ENCODE measurements at regions of chr10 and their contacts with region 1.

Region 1: DNA sequence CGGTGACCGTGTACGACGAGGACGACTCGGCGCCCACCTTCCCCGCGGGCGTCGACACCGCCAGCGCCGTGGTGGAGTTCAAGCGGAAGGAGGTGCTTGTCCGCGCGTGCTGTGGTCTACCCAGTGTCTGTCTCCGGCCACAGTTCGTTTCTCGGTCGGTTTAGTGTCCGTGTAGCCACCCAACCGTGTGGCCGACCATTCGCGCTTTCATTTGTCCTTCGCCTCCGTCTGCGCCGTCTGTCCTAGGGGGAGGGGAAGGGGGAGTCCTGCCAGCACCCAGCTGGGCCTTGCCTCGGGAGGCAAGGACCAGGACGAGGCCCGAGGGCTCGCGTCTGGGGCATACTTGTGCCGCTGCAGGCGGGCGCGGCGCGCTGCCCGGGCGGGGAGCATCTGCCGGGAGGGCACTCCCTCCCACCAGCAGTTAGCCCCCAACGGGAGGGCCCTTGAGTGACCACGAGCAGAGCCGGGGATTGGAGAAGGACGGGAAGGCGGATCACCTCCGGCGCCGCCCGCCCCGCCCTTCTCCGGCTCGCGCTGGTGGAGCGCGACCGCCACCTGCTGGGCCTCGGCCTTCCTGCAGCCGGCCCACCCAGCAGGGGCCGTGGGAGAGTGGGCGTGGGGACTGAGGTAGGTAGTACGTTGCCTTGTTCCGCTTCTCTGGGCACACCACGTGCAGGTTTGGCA is 28.4 kb downstream of the RET start:
- DNase-seq: peak; percentile 69 to 75 (median 75)
- H3K4me3 ChIP-seq: peak overlapping the region; percentile 40 to 78 (median 43)
- H3K4me3 Mint-ChIP-seq: peak overlapping the region; percentile 80 to 92
- H3K27ac ChIP-seq: no peak overlapping the region
- H3K27ac Mint-ChIP-seq: peak overlapping the region in 4 of 7 donors; percentile 35 to 73 (median 64)
- H3K4me1 ChIP-seq: peaks cover 25 to 33% of the 10 kb centered on the region in 2 donors
- H3K4me1 Mint-ChIP-seq: peaks cover 30% of the 10 kb centered on the region
- H3K27me3 ChIP-seq: peaks cover 0 to 20% of the 10 kb centered on the region in 2 donors
- H3K27me3 Mint-ChIP-seq: peaks cover 23 to 35% (median 26%) of the 10 kb centered on the region in 3 donors
- CTCF ChIP-seq: peak; percentile 100

Region 2: DNA sequence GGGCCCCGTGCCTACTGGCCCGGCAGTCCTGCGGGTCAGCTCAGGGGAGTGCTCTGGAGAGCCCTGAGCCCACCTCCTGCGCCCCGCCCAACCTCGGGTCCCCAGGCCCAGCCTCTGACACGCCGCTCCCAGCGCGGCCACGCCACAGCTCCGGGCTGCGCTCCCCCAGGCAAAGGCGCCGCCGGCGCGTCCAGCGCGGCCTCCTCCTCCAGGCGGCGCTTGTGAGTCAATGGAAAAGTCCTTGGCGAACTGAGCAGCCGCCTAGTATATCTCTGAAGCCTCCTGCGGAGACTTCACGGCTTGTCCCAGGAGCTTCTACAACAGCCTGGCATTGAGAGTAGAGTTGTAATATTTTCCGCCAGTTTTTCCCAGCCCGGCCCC is 352.1 kb before region 1 on chr10:
- intact Hi-C with region 1: loop called in 1 of 2 experiments (anchors 2 kb)
- DNase-seq: peak; percentile 27 to 49 (median 31)
- H3K4me3 ChIP-seq: peak overlapping the region in 1 of 3 experiments; percentile 69
- H3K4me3 Mint-ChIP-seq: peak overlapping the region; percentile 78 to 91
- H3K27ac ChIP-seq: no peak overlapping the region
- H3K27ac Mint-ChIP-seq: peak overlapping the region in 1 of 7 donors; percentile 41
- H3K4me1 ChIP-seq: peaks cover 14 to 25% of the 10 kb centered on the region in 2 donors
- H3K4me1 Mint-ChIP-seq: peaks cover 13% of the 10 kb centered on the region
- H3K27me3 ChIP-seq: peaks cover 41 to 79% of the 10 kb centered on the region in 2 donors
- H3K27me3 Mint-ChIP-seq: peaks cover 70 to 90% (median 74%) of the 10 kb centered on the region in 3 donors
- CTCF ChIP-seq: peak; percentile 79

Region 3: DNA sequence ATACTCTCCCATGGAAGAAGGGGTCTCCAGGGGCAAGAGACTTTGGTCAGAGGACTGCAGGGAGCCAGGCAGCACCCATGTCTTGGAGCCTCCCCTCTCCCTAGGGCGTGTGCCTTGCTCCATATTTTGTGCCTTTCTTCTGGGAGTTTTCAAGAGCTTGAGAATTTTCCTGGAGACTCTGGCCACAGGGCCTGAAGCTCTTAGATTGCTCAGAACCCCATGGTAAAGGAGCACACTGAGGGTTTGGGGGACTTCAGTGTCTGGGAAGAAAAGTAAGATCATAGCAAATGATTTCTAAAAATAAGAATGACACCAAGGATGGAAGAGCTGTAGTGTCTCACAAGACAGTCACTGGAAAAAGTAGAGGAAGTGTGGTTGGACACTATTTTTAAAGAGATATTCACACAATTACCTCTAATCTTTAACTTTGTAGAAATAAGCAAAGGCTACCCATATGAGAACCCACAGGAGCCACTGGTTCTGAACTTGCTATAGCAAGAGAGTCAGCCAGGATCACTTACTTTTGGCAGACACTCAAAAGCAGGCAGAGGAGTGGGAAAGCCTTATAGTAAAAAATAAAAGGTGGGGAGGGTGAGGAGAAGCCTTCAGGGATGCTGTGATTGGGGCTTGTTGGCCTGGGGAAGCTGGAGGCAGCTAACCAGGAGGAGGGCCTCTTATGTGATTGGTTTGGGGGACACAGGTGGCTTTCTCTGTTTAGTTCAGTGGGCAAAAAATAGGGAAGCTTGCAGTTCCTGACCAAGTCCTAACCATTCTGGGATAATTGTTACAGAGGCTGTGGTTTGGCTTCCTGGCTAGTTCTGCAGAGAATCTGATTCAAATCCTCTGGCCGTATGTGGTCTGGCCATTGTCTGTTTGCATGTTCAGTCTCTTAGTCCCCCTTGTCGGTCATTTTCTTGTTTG is 27.9 kb after region 1 on chr10:
- intact Hi-C with region 1: loop called in 1 of 2 experiments (anchors 2 kb)
- DNase-seq: peak in 1 of 3 donors; percentile 3
- H3K4me3 ChIP-seq: no peak overlapping the region
- H3K4me3 Mint-ChIP-seq: peak overlapping the region in 1 of 2 donors; percentile 24
- H3K27ac ChIP-seq: peak overlapping the region in 1 of 2 donors; percentile 31
- H3K27ac Mint-ChIP-seq: peak overlapping the region in 6 of 7 donors; percentile 38 to 89 (median 74)
- H3K4me1 ChIP-seq: peaks cover 56 to 84% of the 10 kb centered on the region in 2 donors
- H3K4me1 Mint-ChIP-seq: peaks cover 76% of the 10 kb centered on the region
- H3K27me3 ChIP-seq: no peaks in the 10 kb centered on the region
- H3K27me3 Mint-ChIP-seq: peaks cover 2 to 4% (median 3%) of the 10 kb centered on the region in 3 donors
- CTCF ChIP-seq: no peak

Region 4: DNA sequence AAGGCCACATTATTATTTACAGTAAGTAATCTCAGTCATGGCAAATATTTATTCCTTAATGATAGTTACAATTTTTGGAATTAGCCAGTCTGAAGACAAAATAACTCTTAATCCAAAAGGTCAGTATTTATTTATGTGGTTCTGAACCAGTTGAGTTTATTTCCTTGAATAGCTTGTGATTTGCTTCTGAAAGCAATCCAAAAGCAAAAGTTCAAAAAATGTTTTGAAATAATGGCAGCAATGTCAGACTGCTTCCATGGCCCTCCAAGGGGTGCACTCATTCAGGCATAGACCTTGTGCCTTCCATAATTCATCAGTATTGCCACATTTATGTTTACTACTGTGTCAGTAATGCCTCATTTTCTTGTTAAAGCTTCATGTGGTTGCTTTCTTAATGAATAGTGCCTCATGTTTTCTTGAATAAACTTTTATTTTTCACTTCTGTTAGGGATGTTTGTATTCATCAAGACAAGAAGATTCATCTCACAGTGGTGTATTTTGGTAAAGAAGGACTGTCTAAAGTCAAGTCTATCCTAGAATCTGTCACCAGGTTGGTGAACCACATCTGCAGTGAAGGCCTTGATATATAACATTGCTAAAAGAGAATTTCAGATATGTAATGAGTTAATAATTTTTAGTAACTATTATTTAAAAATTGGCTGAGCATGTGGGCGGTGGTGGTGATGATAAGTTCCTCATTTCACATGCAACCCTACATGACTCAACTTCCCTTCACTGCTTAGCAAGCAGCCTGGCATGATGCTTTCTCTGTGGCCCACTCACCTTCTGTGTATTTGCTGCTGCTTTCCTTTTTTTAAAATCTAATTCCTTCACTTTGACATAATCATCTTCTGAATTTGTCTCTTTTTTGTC is 55.0 kb after region 1 on chr10:
- intact Hi-C with region 1: no loop called
- DNase-seq: peak; percentile 84 to 91 (median 91)
- H3K4me3 ChIP-seq: peak overlapping the region in 1 of 3 experiments; percentile 44
- H3K4me3 Mint-ChIP-seq: peak overlapping the region; percentile 28 to 79
- H3K27ac ChIP-seq: peak overlapping the region; percentile 59 to 86
- H3K27ac Mint-ChIP-seq: peak overlapping the region; percentile 91 to 100 (median 98)
- H3K4me1 ChIP-seq: peaks cover 28 to 56% of the 10 kb centered on the region in 2 donors
- H3K4me1 Mint-ChIP-seq: peaks cover 50% of the 10 kb centered on the region
- H3K27me3 ChIP-seq: no peaks in the 10 kb centered on the region
- H3K27me3 Mint-ChIP-seq: peaks cover 0 to 2% (median 1%) of the 10 kb centered on the region in 3 donors
- CTCF ChIP-seq: no peak

Measured in CD14-positive monocyte (primary cell).